Activated CD8-positive, alpha-beta memory T cell treated with anti-CD3 and anti-CD28 coated beads, Interleukin-2, amount 10 ng/mL, durations not matched to agents 7 days and 5 days (primary cell): ENCODE measurements at regions of chr22 and their contacts with region 1.

Region 1: DNA sequence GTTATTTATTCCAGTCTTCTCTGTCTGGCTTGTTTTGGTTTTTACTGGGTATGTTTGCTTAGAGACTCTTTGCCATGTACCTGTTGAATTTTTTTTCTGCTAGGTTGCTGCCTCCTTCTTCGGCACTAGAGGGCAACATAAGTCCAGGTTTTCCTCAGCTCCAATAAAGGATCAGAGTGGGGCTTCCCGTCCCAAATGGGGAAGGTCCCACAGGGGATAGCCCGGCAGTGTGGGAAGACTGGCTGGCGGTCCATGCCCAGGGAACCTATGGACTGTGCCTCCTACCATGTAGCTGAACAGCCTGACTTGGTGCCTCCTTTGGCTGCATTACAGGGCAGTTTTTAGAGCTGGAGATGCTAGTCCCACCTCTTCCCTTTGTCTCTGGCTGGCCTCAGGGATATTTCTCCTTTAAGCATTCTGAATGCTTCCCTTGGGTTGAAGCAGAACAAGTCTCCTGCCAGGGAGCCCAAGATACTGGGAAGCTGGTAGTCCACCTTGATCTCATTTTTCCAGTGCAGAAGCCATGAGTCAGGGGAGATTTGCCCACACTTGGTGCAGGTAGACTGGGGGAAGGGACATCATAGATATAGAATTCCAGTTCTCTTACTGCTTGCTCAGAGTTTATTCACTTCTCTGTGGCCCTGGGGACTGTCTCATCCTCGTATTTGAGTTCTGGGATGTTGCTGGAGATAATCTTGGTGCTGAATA is 60.2 kb downstream of the BRD1 start:
- DNase-seq: no peak
- ATAC-seq: peak; percentile 54
- H3K4me3 Mint-ChIP-seq: no peak overlapping the region
- H3K27ac Mint-ChIP-seq: no peak overlapping the region
- H3K4me1 Mint-ChIP-seq: peaks cover 12% of the 10 kb centered on the region
- H3K27me3 Mint-ChIP-seq: no peaks in the 10 kb centered on the region

Region 2: DNA sequence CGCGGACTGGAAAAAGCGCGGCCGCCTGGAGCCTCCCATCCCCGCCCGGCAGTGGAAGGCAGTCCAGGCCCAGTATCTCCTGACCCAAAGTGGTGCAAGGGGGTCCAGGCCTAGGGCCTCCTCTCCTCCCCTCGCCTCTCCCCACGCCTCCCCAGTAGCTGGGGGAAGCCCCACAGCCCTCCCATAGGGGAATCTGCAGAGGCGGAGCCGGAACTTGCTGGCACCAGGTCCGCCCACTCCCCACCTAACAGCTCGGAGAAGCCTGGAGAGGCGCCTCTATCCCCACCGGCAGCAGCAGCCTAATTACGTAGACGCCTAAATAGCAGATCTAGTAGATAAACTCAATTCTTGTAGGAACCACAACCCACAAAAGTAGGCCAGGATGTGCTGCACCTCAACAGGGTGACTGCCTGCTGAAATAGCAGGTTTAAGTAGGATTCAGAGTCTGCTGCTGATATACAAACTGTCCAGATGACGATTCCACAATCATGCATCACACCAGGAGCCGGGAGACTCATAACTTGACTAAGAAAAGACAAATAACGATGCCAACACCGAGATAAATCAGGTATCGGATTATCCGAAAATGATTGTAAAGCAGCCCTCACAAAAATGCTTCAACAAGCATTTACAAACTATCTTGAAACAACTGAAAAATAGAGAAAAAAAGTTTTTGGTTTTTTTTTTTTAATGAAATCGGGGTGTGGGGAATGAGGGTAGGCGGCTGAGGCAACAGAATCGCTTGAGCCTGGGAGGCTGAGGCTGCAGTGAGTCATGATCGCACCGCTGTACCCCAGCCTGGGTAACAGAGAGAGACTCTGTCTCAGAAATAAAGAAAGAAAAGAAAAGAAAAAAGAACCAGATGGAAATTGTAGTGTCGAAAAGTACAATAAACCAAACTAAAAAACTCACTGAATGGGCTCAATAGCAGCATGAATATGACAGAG is 71.5 kb after region 1 on chr22:
- CTCF ChIA-PET with region 1: no interaction called
- DNase-seq: peak; percentile 94
- ATAC-seq: peak; percentile 94
- H3K4me3 Mint-ChIP-seq: peak overlapping the region; percentile 74
- H3K27ac Mint-ChIP-seq: peak overlapping the region; percentile 96
- H3K4me1 Mint-ChIP-seq: peaks cover 37% of the 10 kb centered on the region
- H3K27me3 Mint-ChIP-seq: no peaks in the 10 kb centered on the region

Region 3: GRCh38 chr22:49917974-49918910 is 150.7 kb after region 1 on chr22 and contains the starts of genes ALG12 and CRELD2:
- CTCF ChIA-PET with region 1: interaction called, 12 read pairs
- DNase-seq: peak; percentile 98
- ATAC-seq: peak; percentile 99
- H3K4me3 Mint-ChIP-seq: peak within 1 kb of the TSS; percentile 78
- H3K27ac Mint-ChIP-seq: peak within 1 kb of the TSS; percentile 86
- H3K4me1 Mint-ChIP-seq: peaks cover 21% of the 10 kb centered on the region
- H3K27me3 Mint-ChIP-seq: no peaks in the 10 kb centered on the region
- total RNA-seq, gene ALG12: 16.8 to 18.8 TPM
- total RNA-seq, gene CRELD2: 43.9 to 51.2 TPM

Region 4: DNA sequence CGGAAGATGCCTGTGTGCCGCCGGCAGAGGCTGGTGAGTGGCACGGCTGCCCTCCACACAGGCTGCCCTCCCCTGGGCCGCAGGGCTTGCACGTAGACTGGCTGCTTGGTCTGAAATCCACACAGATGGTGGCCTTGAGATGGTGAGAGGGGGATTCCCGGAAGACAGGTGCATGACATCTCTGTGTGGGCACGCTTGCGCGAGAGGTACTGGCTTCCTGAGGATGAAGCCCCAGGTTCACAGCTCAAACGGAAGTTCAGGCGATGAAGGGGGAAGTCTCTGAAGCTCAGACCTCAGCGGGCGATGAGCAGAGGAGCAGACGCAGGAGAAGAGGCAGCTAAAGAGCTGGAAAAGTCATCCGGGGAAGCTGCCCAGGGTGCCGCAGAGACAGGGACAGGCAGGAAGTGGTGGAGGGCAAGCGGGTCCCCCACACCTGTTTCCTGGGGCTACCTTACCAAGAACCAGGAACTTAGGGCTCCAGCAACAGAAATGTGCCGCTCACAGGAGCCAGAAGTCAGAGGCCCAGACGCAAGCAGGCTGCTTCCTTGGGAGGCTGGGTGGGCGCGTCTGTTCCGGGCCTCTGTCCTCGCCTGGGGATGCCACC is 158.1 kb after region 1 on chr22:
- CTCF ChIA-PET with region 1: interaction called, 23 read pairs
- DNase-seq: peak; percentile 75
- ATAC-seq: peak; percentile 63
- H3K4me3 Mint-ChIP-seq: peak overlapping the region; percentile 66
- H3K27ac Mint-ChIP-seq: peak overlapping the region; percentile 90
- H3K4me1 Mint-ChIP-seq: peaks cover 26% of the 10 kb centered on the region
- H3K27me3 Mint-ChIP-seq: no peaks in the 10 kb centered on the region